Heart left ventricle (tissue), 16 donors: ENCODE measurements at regions of chr21 and their contacts with region 1.

Region 1: DNA sequence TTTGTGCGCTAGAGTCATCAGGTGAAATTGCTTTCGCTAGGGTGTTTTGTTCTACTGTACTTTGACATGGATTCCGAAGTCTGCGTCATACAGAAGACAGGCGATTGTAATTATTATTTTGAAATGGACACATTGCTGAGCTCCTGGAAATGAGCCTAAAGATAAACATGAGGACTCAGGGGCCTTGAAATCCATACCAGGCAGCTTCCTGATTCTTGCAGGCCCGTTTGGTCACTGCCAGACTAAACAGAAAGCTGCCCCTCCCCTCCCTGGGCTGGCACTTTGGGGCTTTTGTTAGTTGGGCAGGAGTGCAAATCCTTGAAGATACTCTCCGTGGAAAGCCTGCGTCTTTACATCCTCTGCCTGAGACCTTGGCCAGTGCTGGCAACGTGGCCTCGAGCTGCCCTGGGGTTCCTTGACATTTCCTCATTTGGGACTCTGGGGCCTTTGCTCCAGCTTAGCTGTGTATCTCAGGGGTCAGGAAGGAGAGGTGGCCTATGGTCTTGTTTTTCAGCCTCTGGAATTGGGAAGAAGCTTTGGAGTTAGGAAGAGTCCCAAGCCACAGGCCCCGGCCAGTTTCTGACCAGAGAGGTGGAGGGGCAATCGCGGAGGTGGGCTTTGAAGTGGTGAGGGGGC is 26.9 kb upstream of the KCNE2 start:
- DNase-seq: no peak
- ATAC-seq: peak; percentile 13 to 37 (median 22)
- H3K4me3 ChIP-seq: no peak overlapping the region
- H3K27ac ChIP-seq: peak overlapping the region in 2 of 12 donors; percentile 30 to 47
- H3K4me1 ChIP-seq: peaks cover 0 to 21% (median 13%) of the 10 kb centered on the region in 12 donors
- H3K27me3 ChIP-seq: no peaks in the 10 kb centered on the region
- CTCF ChIP-seq: no peak
- POLR2A ChIP-seq: no peak

Region 2: DNA sequence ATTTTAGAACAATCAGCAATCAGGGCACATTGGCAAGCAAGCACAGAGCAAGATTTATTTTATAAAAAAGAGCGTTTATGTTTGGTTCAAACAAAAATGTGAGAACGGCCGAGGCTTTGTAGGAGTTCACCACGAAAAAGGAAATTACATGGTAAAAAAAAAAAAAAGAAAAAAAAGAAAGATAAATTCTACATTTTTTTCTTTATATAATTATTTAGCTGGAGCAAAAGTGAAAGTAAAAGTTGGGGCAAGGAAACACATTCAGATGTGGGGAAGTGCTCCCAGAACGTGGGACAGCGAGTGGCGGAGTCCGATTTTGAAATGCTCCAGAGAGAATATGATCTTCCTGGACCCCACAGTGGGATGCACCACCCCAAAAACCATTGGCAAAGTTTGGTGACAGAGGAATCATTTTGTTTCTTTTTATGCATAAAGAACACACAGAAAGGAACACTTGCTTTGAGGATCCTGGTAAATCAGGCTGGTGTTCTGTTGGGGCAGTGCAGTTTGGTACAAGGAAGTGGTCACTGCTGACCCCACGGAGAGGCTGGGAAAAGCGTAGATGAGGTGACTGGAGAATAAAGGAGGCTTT is 405.0 kb before region 1 on chr21:
- intact Hi-C with region 1: loop called in 2 of 10 experiments (anchors 5 to 10 kb)
- DNase-seq: no peak
- ATAC-seq: peak in 3 of 4 donors; percentile 50 to 61 (median 58)
- H3K4me3 ChIP-seq: peak overlapping the region in 11 of 12 donors; percentile 14 to 59 (median 44)
- H3K27ac ChIP-seq: peak overlapping the region in 9 of 12 donors; percentile 0 to 88 (median 44)
- H3K4me1 ChIP-seq: peaks cover 0 to 27% (median 7%) of the 10 kb centered on the region in 12 donors
- H3K27me3 ChIP-seq: no peaks in the 10 kb centered on the region
- CTCF ChIP-seq: no peak
- POLR2A ChIP-seq: no peak

Region 3: GRCh38 chr21:34029743-34030528 is 306.9 kb before region 1 on chr21:
- intact Hi-C with region 1: no loop called
- DNase-seq: peak in 4 of 5 donors; percentile 25 to 50 (median 34)
- ATAC-seq: peak; percentile 61 to 96 (median 88)
- H3K4me3 ChIP-seq: peak overlapping the region in 3 of 12 donors; percentile 0 to 20 (median 8)
- H3K27ac ChIP-seq: no peak overlapping the region
- H3K4me1 ChIP-seq: peaks cover 0 to 14% (median 0%) of the 10 kb centered on the region in 12 donors
- H3K27me3 ChIP-seq: peaks cover 0 to 3% (median 0%) of the 10 kb centered on the region in 9 donors
- CTCF ChIP-seq: no peak
- POLR2A ChIP-seq: no peak